ENCODE measurements at regions of chr4 and their contacts with region 1.

Region 1: DNA sequence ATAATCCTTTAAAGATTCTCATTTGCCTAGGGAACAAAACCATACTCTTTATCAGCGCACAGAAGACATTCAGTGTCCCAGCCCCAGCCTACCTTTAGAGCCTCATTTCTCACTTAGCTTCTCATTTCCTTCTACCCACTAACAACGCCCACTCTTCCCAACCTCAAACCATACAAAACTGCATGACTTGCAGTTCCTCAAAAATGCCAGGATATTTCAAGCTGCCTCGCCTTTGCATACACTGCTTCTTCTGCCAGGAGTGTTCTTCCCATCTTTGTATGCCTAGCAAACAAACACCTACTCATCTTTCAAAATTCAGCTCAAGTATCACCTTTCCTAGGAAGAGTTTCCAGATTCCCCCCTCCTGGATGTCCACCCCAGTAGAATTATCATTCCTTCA is 129.9 kb upstream of the ADGRL3 start:
- DNase-seq: peak; percentile 62
- ATAC-seq: peak; percentile 87
- H3K4me3 ChIP-seq: no peak overlapping the region
- H3K27ac ChIP-seq: no peak overlapping the region
- H3K4me1 ChIP-seq: peaks cover 8% of the 10 kb centered on the region
- H3K27me3 ChIP-seq: no peaks in the 10 kb centered on the region
- CTCF ChIP-seq: no peak

Region 2: GRCh38 chr4:60840020-60840419 is 230.2 kb before region 1 on chr4:
- CTCF ChIA-PET with region 1: no interaction called
- POLR2A ChIA-PET with region 1: no interaction called
- intact Hi-C with region 1: no loop called
- DNase-seq: no peak
- ATAC-seq: no peak
- H3K4me3 ChIP-seq: no peak overlapping the region
- H3K27ac ChIP-seq: no peak overlapping the region
- H3K4me1 ChIP-seq: no peaks in the 10 kb centered on the region
- H3K27me3 ChIP-seq: no peaks in the 10 kb centered on the region
- CTCF ChIP-seq: no peak

Region 3: DNA sequence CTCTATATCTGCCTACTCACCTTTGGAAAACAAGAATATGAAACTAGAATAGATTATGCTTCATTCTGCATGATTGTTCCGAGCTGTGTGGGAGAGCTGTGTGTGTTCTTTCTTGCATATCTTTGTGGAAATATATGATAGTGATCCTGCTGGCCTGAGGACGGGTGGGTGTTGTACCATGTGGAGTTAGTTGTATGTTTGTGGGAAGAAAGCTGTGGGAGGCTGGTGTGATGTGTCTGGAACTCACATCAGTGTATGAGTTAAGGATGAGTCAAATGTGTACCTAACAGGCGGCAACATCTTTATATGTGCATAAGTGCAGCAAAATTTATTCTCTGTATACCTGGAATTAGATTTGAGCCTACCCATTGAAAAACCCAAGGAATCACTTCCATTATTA is 78.2 kb before region 1 on chr4:
- CTCF ChIA-PET with region 1: no interaction called
- POLR2A ChIA-PET with region 1: no interaction called
- intact Hi-C with region 1: loop called (anchors 2 kb)
- DNase-seq: peak; percentile 91
- ATAC-seq: peak; percentile 96
- H3K4me3 ChIP-seq: no peak overlapping the region
- H3K27ac ChIP-seq: peak overlapping the region; percentile 62
- H3K4me1 ChIP-seq: peaks cover 40% of the 10 kb centered on the region
- H3K27me3 ChIP-seq: no peaks in the 10 kb centered on the region
- CTCF ChIP-seq: no peak